Endothelial cell of umbilical vein (primary cell): ENCODE measurements at regions of chr1 and their contacts with region 1.

Region 1: DNA sequence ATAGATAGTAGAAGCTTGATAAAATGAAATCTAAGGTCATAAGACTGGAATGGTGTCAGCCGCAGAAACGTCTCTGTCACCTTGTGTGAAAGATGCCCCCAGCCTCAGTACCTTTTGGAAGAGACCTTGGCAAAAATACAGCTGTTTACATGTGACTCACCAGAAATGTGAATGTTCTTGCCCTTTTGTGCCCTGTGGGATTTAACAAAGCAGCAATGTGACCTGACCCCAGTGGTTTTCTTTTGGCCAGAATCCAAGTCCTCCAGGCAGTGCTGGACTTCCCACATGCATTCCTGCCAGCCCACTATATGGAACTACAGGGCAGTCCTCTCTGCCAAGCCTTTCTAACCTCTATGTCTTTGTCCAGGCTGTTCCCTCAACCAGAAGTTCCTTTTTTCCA is 27.2 kb upstream of the LRRC8C start:
- DNase-seq: peak; percentile 82
- H3K4me3 ChIP-seq: no peak overlapping the region
- H3K27ac ChIP-seq: no peak overlapping the region
- H3K4me1 ChIP-seq: peaks cover 14% of the 10 kb centered on the region
- H3K27me3 ChIP-seq: no peaks in the 10 kb centered on the region
- CTCF ChIP-seq: no peak
- POLR2A ChIP-seq: no peak

Region 2: DNA sequence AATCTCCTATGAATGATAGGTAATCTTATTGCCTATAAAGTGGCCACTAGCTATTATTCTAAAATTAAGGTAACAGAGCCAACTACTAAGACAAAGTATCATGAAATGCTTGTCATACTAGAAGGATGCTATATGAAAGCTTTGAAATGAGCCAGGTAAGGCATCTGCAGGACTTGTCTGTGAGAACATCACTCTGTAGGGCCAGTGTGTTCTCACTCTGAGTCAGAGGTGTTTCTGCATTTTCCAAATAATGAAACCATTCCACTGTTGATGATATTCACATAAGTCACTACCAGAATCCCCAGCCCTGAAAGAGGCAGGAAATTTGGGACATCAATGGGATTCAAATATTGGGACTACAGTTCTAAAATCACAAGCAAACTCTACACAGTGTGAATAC is 307.2 kb before region 1 on chr1:
- CTCF ChIA-PET with region 1: no interaction called
- POLR2A ChIA-PET with region 1: no interaction called
- dilution Hi-C with region 1: no loop called
- intact Hi-C with region 1: loop called (anchors 5 kb)
- DNase-seq: no peak
- H3K4me3 ChIP-seq: no peak overlapping the region
- H3K27ac ChIP-seq: no peak overlapping the region
- H3K4me1 ChIP-seq: no peaks in the 10 kb centered on the region
- H3K27me3 ChIP-seq: no peaks in the 10 kb centered on the region
- CTCF ChIP-seq: no peak
- POLR2A ChIP-seq: no peak

Region 3: GRCh38 chr1:89688607-89689006 is 82.9 kb after region 1 on chr1:
- CTCF ChIA-PET with region 1: no interaction called
- POLR2A ChIA-PET with region 1: no interaction called
- dilution Hi-C with region 1: no loop called
- intact Hi-C with region 1: no loop called
- DNase-seq: no peak
- H3K4me3 ChIP-seq: no peak overlapping the region
- H3K27ac ChIP-seq: no peak overlapping the region
- H3K4me1 ChIP-seq: peaks cover 26% of the 10 kb centered on the region
- H3K27me3 ChIP-seq: no peaks in the 10 kb centered on the region
- CTCF ChIP-seq: no peak
- POLR2A ChIP-seq: no peak

Region 4: DNA sequence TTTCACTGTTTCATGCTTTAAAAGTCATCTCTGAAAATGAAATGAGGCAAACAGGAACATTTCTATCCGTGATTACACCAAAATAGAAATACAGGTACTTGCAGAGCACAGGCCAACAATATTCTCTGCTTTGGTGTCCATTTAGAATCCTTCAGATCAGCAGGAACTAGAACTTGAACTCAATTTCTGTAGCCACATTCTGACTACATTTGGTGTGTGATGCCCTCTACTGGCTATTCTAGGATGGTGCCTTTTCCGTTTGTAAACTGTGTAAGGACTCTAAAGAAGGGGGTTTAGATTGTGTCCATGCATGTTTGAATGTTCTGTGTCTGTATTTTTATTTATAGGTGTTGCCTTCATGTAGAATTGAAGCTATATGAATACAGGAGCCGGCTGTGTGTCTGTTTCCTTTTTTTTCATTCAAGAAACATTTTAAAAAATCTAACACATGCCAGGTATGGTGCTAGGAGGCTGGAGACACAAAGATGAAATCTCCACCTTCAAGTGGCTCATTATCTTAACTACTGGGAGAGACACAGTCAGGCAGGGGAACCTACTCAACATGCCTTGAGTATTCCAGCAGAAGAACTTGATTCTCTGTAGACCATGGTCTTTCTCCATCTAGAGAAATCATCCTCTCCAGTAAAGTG is 381.6 kb after region 1 on chr1:
- CTCF ChIA-PET with region 1: no interaction called
- POLR2A ChIA-PET with region 1: no interaction called
- dilution Hi-C with region 1: no loop called
- intact Hi-C with region 1: loop called (anchors 10 kb)
- DNase-seq: peak; percentile 82
- H3K4me3 ChIP-seq: no peak overlapping the region
- H3K27ac ChIP-seq: no peak overlapping the region
- H3K4me1 ChIP-seq: no peaks in the 10 kb centered on the region
- H3K27me3 ChIP-seq: peaks cover 0 to 2% of the 10 kb centered on the region in 2 experiments
- CTCF ChIP-seq: peak; percentile 66 to 68
- POLR2A ChIP-seq: no peak

Region 5: DNA sequence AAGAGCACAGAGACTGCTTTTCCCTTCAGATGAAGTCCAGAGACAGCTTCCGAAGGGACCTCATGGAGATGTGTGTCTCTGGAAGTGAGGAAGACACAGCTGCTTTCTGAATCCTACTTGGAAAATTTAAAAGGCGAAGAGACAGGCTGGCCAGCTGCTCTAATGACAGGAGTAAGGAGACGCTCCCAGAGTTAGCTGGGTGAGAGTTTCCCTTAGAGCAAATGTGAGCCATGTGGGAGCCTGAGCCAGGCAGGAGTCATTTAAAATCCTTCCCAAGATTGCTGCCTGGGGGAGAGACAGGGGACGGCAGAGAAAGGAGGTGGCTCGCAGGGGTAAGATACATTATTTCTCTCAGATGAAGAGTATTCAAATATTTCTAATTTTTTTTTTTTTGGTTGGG is 442.4 kb after region 1 on chr1:
- CTCF ChIA-PET with region 1: no interaction called
- POLR2A ChIA-PET with region 1: no interaction called
- dilution Hi-C with region 1: no loop called
- intact Hi-C with region 1: no loop called
- DNase-seq: no peak
- H3K4me3 ChIP-seq: no peak overlapping the region
- H3K27ac ChIP-seq: no peak overlapping the region
- H3K4me1 ChIP-seq: no peaks in the 10 kb centered on the region
- H3K27me3 ChIP-seq: peaks cover 9 to 25% of the 10 kb centered on the region in 2 experiments
- CTCF ChIP-seq: no peak
- POLR2A ChIP-seq: no peak